ENCODE measurements at regions of chr5 and their contacts with region 1.

Region 1: DNA sequence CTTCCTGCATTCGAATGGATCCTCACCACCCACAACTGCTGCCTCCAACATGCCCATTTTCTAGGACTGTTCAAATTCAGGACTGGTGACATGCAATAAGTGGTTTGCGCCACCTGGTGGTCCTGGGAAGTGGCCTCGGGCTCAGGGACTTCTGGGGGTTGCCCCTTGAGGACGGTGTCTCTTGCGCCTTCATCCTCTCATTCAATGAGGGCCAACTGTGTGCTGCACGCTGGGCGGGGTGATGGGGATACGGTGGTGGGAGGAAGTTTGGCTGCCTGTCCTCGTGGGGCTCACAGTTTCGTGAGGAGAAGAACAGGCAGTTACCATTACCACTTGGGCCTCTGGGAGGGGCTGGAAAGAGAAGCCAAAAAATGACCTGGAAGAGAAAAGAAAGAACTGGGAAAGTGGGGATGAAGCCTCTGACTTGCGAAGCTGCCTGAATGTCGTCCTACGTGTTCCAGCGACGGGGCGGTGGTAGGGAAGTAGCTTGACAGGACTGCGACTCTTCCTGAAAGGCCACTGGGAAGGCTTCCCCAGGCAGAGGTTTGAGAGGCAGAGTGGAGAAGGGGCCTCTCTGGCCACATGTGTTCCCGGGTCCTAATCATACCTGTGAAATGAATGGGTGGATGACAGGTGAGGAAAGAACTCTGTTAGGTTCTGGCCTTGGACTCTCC is 49.0 kb downstream of the PSD2 start:
- DNase-seq: peak; percentile 82
- H3K4me3 Mint-ChIP-seq: peak overlapping the region; percentile 2
- H3K27ac Mint-ChIP-seq: peak overlapping the region; percentile 8
- H3K4me1 Mint-ChIP-seq: peaks cover 8% of the 10 kb centered on the region
- H3K27me3 Mint-ChIP-seq: peaks cover 22% of the 10 kb centered on the region

Region 2: GRCh38 chr5:139863855-139864558 is 19.4 kb after region 1 on chr5:
- CTCF ChIA-PET with region 1: interaction called, 13 read pairs
- POLR2A ChIA-PET with region 1: interaction called, 3 read pairs
- intact Hi-C with region 1: no loop called
- DNase-seq: peak; percentile 66
- H3K4me3 Mint-ChIP-seq: no peak overlapping the region
- H3K27ac Mint-ChIP-seq: no peak overlapping the region
- H3K4me1 Mint-ChIP-seq: no peaks in the 10 kb centered on the region
- H3K27me3 Mint-ChIP-seq: no peaks in the 10 kb centered on the region

Region 3: DNA sequence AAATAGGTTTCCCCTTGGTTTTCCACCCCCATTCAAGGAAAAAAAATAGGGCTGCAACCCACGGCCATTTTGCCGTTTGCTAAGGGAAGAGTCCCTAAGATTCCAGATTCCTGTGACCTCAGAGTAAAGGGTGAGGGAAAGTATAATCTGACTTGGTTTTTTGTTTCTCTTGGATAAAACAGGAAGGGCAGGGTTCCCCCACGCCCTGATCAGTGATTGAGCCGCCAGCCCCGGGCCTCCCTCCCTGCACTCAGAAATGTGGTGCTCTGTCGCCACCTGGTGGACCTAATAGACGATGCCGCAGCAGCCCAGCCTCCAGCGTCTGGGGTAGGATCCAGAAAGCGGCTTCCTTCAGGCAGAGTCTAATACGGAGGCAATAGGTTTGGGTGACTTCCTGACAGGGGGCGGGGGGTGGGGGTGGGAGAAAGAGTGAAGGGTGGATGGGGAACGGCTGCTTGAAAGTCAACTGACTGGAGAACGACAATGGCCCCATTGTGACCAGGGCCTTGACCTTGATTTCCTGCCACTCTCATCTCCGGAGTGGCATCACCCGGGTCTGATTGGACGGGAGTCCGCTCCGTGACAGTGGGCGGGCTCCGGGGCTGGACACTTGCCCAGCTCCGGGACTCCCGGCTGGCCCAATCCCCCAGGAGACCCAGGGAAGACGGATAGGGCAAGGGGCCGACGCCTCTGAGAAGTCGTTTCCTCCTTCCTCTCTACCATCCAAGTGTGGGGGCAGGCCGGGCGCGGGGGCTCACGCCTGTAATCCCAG is 312.6 kb after region 1 on chr5:
- CTCF ChIA-PET with region 1: no interaction called
- POLR2A ChIA-PET with region 1: no interaction called
- intact Hi-C with region 1: loop called (anchors 10 kb)
- DNase-seq: peak; percentile 92
- H3K4me3 Mint-ChIP-seq: peak overlapping the region; percentile 2
- H3K27ac Mint-ChIP-seq: no peak overlapping the region
- H3K4me1 Mint-ChIP-seq: peaks cover 10% of the 10 kb centered on the region
- H3K27me3 Mint-ChIP-seq: no peaks in the 10 kb centered on the region

Region 4: GRCh38 chr5:140785905-140786686 is 941.5 kb after region 1 on chr5 and contains the start of gene PCDHA1:
- CTCF ChIA-PET with region 1: no interaction called
- POLR2A ChIA-PET with region 1: no interaction called
- intact Hi-C with region 1: no loop called
- DNase-seq: no peak
- H3K4me3 Mint-ChIP-seq: no peak within 1 kb of the TSS
- H3K27ac Mint-ChIP-seq: no peak within 1 kb of the TSS
- H3K4me1 Mint-ChIP-seq: no peaks in the 10 kb centered on the region
- H3K27me3 Mint-ChIP-seq: peaks cover 24% of the 10 kb centered on the region
- total RNA-seq, gene PCDHA1: not detected